ENCODE measurements at regions of chr18 and their contacts with region 1.

Region 1: DNA sequence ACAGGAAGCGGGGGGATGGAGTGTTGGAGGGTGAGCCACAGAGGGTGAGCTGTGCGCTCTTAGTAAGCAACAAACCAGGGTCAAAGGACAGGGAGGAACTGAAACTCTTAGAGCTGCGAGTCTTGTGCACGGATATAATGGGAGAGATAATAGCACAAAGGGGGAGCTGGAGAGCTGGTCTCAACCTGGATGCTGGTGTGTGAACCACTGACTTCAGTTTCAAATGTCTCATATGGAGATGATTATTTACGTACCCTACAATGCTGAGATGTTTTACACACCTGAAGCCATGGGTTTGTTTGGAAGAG is 35.9 kb downstream of the PTGR3 start:
- DNase-seq: peak in 2 of 4 experiments; percentile 13 to 16
- ATAC-seq: peak; percentile 65
- H3K4me3 ChIP-seq: no peak overlapping the region
- H3K27ac ChIP-seq: no peak overlapping the region
- H3K4me1 ChIP-seq: peaks cover 0 to 3% of the 10 kb centered on the region in 2 experiments; a peak in 2 of 5 replicates
- H3K27me3 ChIP-seq: peaks cover 8 to 70% of the 10 kb centered on the region in 2 experiments; a peak in 4 of 5 replicates
- CTCF ChIP-seq: peak in 2 of 3 experiments; percentile 9 to 16; a peak in 2 of 6 replicates
- EP300 ChIP-seq: no peak
- POLR2A ChIP-seq: no peak
- RAD21 ChIP-seq: peak in 1 of 2 experiments; percentile 22; a peak in 1 of 4 replicates

Region 2: DNA sequence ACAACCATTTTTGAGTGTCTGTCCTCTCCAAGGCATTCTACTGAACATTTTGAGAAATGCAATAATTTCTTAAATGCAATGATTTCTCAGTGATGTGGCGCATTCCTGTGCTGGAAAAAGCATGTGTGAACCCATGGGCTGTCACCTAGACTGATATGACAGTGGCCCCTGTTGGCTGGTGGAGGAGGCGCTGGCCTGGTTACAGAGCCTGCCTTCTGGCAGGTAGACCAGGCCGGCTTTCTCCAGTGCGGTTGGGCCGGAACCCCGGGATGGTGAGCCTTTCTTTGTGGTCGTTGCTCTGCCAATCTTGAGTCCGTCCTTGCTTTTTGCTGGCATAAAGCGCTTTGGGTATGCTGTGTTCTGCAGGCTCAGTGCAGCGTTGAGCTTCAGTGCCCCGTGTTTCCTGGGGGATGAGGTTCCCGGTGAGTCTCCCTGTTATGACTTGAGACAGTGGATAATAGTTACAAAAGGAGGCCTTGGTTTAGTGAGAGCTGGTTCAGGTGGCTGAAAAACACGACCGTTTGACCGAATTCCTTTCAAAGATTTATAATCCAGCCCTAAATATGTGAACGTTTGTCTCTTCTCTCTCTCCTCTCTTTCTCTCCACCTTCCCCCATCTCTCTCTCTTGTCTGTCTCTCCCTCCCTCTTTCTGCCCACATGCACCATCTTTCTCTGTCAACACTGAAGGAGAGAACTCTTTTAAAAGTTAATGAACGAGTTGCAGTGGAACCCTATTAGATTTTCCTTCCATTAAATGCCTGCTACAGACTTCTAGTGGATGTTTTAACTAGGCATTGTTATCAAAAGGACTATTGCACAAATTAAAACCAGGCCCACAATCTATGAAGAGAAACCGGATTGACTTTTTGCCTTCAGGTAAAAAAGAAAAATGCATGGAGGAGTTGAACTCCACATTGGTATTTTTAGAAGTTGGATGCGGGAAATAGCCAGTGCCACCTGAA is 71.6 kb after region 1 on chr18:
- CTCF ChIA-PET with region 1: no interaction called
- POLR2A ChIA-PET with region 1: no interaction called
- in situ Hi-C with region 1: no loop called
- intact Hi-C with region 1: loop called (anchors 5 kb)
- DNase-seq: peak; percentile 11 to 28 (median 13)
- ATAC-seq: peak; percentile 87
- H3K4me3 ChIP-seq: no peak overlapping the region
- H3K27ac ChIP-seq: no peak overlapping the region
- H3K4me1 ChIP-seq: peaks cover 0 to 7% of the 10 kb centered on the region in 2 experiments; a peak in 3 of 5 replicates
- H3K27me3 ChIP-seq: no peaks in the 10 kb centered on the region
- CTCF ChIP-seq: peak; percentile 46 to 50 (median 48)
- EP300 ChIP-seq: no peak
- POLR2A ChIP-seq: no peak
- RAD21 ChIP-seq: peak; percentile 16 to 47; a peak in 2 of 4 replicates